Activated CD4-positive, alpha-beta memory T cell treated with anti-CD3 and anti-CD28 coated beads, Interleukin-2, amount 10 ng/mL, durations not matched to agents 7 days and 5 days (primary cell): ENCODE measurements at regions of chr10 and their contacts with region 1.

Region 1: DNA sequence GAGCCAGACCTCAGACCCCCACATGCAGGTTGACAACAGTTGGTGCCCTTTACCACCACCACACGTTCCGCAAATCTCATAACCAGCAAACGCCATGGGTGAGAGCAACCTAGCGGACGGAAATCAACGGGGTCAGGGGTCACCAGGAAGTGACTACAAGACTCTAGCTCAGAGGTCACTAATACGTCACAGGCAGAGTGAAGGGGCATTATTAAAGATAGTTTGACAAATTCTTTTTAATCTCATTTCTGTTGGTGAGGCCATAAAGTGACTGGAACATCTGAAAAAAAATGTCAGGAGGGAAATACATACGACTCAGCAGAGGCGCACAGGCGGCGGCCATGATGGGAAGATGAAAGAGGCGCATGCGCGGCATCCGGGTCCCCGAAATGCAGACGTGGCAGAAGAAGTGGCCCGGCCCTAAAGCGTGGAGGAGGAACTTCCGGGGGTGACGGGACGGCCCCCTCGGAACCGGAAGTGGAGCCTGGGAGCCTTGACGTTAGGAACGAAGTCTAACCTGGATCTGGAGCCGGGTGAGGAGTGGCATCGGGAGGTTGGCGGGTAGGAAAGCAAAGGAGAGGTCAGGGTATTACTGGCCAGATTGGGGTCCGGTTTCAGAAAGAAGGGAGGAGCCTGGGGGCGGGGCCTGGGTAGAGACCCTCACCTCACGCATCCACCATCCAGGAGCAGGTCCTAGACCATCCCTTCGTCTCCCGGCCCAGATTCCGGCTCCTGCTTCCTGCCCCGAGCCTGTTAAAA is at the start of gene SEC24C:
- DNase-seq: peak; percentile 97
- H3K4me3 Mint-ChIP-seq: peak within 1 kb of the TSS; percentile 94
- H3K27ac Mint-ChIP-seq: peak within 1 kb of the TSS; percentile 99
- H3K4me1 Mint-ChIP-seq: peaks cover 38% of the 10 kb centered on the region
- H3K27me3 Mint-ChIP-seq: no peaks in the 10 kb centered on the region
- total RNA-seq, gene SEC24C: 106 to 108 TPM

Region 2: GRCh38 chr10:73459683-73460314 is 284.3 kb before region 1 on chr10:
- CTCF ChIA-PET with region 1: no interaction called
- POLR2A ChIA-PET with region 1: no interaction called
- DNase-seq: no peak
- H3K4me3 Mint-ChIP-seq: no peak overlapping the region
- H3K27ac Mint-ChIP-seq: no peak overlapping the region
- H3K4me1 Mint-ChIP-seq: no peaks in the 10 kb centered on the region
- H3K27me3 Mint-ChIP-seq: no peaks in the 10 kb centered on the region

Region 3: GRCh38 chr10:73717556-73717955 is 26.5 kb before region 1 on chr10:
- CTCF ChIA-PET with region 1: no interaction called
- POLR2A ChIA-PET with region 1: no interaction called
- DNase-seq: no peak
- H3K4me3 Mint-ChIP-seq: no peak overlapping the region
- H3K27ac Mint-ChIP-seq: no peak overlapping the region
- H3K4me1 Mint-ChIP-seq: no peaks in the 10 kb centered on the region
- H3K27me3 Mint-ChIP-seq: no peaks in the 10 kb centered on the region

Region 4: DNA sequence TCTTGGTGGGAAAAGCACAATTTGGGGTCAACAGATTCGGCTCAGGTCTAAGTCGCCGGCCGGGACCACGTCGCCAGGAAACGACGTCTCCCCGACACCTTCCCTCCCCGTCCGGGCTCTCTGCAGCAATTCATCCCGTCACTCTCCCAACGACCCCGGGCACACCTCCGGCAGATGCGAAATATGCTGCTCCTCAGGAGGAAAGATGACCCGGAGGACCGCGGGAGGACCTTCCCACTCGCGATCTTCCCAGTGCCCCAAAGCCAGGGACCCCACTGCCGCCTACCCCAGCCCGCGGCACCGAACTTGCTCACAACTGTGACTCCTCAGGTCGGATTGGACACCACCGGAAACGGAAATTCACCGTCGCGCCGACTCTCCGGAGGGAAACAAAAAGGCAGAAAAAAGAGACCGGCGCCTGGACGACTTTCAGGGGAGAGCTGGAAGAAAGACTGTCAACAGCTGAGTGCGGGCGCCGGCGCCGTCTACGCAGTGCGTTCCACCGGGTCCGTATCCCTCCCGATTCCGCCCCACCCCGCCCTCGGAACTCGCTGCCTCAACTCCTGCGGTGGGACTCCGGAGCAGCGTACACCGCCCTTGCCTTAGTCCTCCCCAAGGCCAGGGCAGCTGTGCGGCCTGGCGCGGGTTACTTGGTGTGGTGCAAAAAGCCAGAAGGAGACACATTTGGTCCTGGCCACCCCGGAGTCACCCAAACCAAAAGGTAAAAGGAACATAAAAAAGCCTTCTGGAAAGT is 13.8 kb before region 1 on chr10:
- CTCF ChIA-PET with region 1: interaction called, 31 read pairs
- POLR2A ChIA-PET with region 1: interaction called, 164 read pairs
- DNase-seq: peak; percentile 94
- H3K4me3 Mint-ChIP-seq: peak overlapping the region; percentile 92
- H3K27ac Mint-ChIP-seq: peak overlapping the region; percentile 96
- H3K4me1 Mint-ChIP-seq: peaks cover 19% of the 10 kb centered on the region
- H3K27me3 Mint-ChIP-seq: no peaks in the 10 kb centered on the region

Region 5: GRCh38 chr10:73759512-73760115 is 15.5 kb after region 1 on chr10:
- CTCF ChIA-PET with region 1: interaction called, 4 read pairs
- POLR2A ChIA-PET with region 1: interaction called, 31 read pairs
- DNase-seq: peak; percentile 44
- H3K4me3 Mint-ChIP-seq: peak overlapping the region; percentile 21
- H3K27ac Mint-ChIP-seq: peak overlapping the region; percentile 70
- H3K4me1 Mint-ChIP-seq: peaks cover 69% of the 10 kb centered on the region
- H3K27me3 Mint-ChIP-seq: no peaks in the 10 kb centered on the region

Region 6: GRCh38 chr10:73765066-73765465 is 21.0 kb after region 1 on chr10:
- CTCF ChIA-PET with region 1: interaction called, 11 read pairs
- POLR2A ChIA-PET with region 1: interaction called, 55 read pairs
- DNase-seq: no peak
- H3K4me3 Mint-ChIP-seq: no peak overlapping the region
- H3K27ac Mint-ChIP-seq: no peak overlapping the region
- H3K4me1 Mint-ChIP-seq: peaks cover 64% of the 10 kb centered on the region
- H3K27me3 Mint-ChIP-seq: no peaks in the 10 kb centered on the region

Region 7: GRCh38 chr10:73772280-73773151 is 28.4 kb after region 1 on chr10:
- CTCF ChIA-PET with region 1: interaction called, 15 read pairs
- POLR2A ChIA-PET with region 1: interaction called, 55 read pairs
- DNase-seq: peak; percentile 86
- H3K4me3 Mint-ChIP-seq: peak overlapping the region; percentile 85
- H3K27ac Mint-ChIP-seq: peak overlapping the region; percentile 93
- H3K4me1 Mint-ChIP-seq: peaks cover 67% of the 10 kb centered on the region
- H3K27me3 Mint-ChIP-seq: no peaks in the 10 kb centered on the region

Region 8: DNA sequence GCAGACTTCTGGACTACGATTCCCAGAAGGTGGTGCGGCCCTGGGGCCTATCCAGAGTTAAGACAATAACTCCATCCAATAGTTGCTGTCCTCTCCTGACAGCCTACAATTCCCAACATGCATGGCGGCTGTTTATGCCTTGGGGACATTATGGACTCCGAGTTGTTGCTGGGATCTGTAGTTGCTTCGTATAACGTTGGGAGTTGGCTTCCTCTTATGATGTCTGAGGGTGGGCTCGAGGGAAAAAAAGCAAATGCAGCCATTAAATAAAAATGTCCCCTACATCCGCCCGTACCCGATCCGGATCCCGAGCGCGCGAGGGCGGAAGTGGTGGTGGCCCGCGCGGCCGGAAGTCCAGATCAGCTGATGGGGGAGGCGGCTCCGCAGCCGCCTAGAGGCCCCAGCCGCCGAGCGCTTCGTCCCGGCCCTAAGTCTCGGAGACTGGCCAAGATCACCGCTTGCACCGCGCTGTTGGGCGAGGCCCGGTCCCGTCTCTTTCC is 41.2 kb after region 1 on chr10 and contains the start of gene ZSWIM8:
- CTCF ChIA-PET with region 1: interaction called, 3 read pairs
- POLR2A ChIA-PET with region 1: interaction called, 20 read pairs
- DNase-seq: peak; percentile 87
- H3K4me3 Mint-ChIP-seq: peak within 1 kb of the TSS; percentile 85
- H3K27ac Mint-ChIP-seq: peak within 1 kb of the TSS; percentile 98
- H3K4me1 Mint-ChIP-seq: peaks cover 58% of the 10 kb centered on the region
- H3K27me3 Mint-ChIP-seq: no peaks in the 10 kb centered on the region
- total RNA-seq, gene ZSWIM8: 88.0 to 92.2 TPM

Region 9: GRCh38 chr10:73810735-73811465 is 66.8 kb after region 1 on chr10:
- CTCF ChIA-PET with region 1: no interaction called
- POLR2A ChIA-PET with region 1: interaction called, 20 read pairs
- DNase-seq: peak; percentile 66
- H3K4me3 Mint-ChIP-seq: peak overlapping the region; percentile 91
- H3K27ac Mint-ChIP-seq: peak overlapping the region; percentile 95
- H3K4me1 Mint-ChIP-seq: peaks cover 45% of the 10 kb centered on the region
- H3K27me3 Mint-ChIP-seq: no peaks in the 10 kb centered on the region

Region 10: GRCh38 chr10:74113546-74113945 is 369.5 kb after region 1 on chr10:
- CTCF ChIA-PET with region 1: no interaction called
- POLR2A ChIA-PET with region 1: no interaction called
- DNase-seq: no peak
- H3K4me3 Mint-ChIP-seq: no peak overlapping the region
- H3K27ac Mint-ChIP-seq: no peak overlapping the region
- H3K4me1 Mint-ChIP-seq: peaks cover 10% of the 10 kb centered on the region
- H3K27me3 Mint-ChIP-seq: no peaks in the 10 kb centered on the region